ENCODE measurements at regions of chr5 and their contacts with region 1.

Region 1: DNA sequence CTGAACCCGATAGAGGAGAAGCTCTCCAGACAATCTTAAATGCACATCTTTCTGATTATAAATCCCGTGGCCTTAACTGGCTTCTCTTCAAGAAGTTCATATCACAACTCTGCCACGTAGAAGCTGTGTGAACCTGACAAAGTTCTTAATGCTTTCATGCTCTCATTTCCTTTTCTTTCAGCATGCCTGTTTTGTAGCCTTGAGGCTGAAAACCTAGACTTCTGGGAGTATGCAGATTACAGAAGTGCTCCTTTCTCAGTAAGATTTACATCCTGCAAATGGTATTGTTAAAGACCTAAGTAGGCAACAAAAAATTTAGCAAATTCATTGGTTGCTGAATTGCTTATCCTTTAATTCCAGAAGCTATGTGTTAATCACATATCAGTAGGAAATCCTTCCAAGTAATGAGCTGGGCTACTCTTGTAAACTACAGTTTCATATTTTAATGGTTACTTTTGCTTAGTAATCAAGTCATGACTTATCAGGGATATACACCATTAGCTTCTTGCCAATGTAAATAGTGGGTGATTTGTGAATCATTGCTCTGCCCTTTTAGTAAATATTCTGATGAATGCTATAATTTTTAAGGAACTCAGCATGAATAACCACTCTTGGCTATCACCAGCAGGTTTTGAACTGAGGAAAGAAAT is 334.7 kb downstream of the FBXL7 start:
- DNase-seq: no peak

Region 2: DNA sequence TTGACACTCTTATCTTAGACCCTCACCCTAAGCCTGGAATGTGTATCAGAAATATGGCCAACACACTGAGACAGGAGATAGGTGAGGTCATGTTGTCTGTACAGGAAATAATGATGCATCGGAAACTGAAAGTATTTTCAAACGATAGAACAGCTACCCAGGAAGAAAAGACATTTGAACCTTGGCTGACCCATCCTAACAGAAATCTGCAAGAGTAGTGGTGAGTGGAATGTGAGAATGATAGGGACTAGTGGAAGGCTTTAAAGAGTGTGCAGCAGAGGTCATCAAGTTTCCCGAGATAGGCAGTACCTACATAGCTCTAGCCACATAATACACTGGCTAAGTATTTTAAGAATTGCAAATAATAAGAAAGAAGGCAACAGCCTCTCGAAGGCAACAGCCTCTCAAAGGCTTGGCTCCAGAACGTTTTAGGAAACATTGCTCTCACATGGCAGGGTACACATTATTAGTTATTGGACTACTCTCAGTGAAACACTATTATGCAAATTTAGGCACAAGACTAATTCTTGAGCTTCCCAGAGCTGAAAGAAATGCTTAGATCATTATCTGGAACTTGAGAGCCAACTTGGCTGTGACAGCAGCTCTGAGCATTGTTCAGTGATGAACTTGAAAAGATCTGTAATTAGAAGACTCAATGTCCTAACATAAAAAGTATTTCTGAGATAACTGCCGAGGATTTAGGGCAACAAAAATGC is 467.9 kb before region 1 on chr5:
- intact Hi-C with region 1: loop called (anchors 10 kb)
- DNase-seq: no peak